ENCODE measurements at regions of chr2 and their contacts with region 1.

Region 1: GRCh38 chr2:38377050-38377828 is at the start of gene ATL2:
- DNase-seq: peak; percentile 96 to 97
- ATAC-seq: peak; percentile 93 to 97 (median 94)
- H3K4me3 ChIP-seq: peak within 1 kb of the TSS; percentile 87 to 100 (median 94)
- H3K27ac ChIP-seq: peak within 1 kb of the TSS; percentile 94 to 100 (median 99)
- H3K4me1 ChIP-seq: peaks cover 0 to 54% (median 34%) of the 10 kb centered on the region in 9 donors
- H3K27me3 ChIP-seq: no peaks in the 10 kb centered on the region
- CTCF ChIP-seq: no peak
- total RNA-seq, gene ATL2: 24.4 to 46.2 (median 31.3) TPM

Region 2: GRCh38 chr2:38409156-38410122 is 32.2 kb after region 1 on chr2:
- intact Hi-C with region 1: loop called in 1 of 10 experiments (anchors 1 kb)
- DNase-seq: peak in 1 of 2 donors; percentile 23
- ATAC-seq: peak in 3 of 8 donors; percentile 34 to 63 (median 43)
- H3K4me3 ChIP-seq: no peak overlapping the region
- H3K27ac ChIP-seq: peak overlapping the region in 1 of 10 donors; percentile 41
- H3K4me1 ChIP-seq: peaks cover 0 to 53% (median 21%) of the 10 kb centered on the region in 9 donors
- H3K27me3 ChIP-seq: no peaks in the 10 kb centered on the region
- CTCF ChIP-seq: no peak

Region 3: GRCh38 chr2:38438883-38439612 is 61.8 kb after region 1 on chr2:
- intact Hi-C with region 1: loop called in 3 of 10 experiments (anchors 10 kb)
- DNase-seq: no peak
- ATAC-seq: peak in 1 of 8 donors; percentile 20
- H3K4me3 ChIP-seq: no peak overlapping the region
- H3K27ac ChIP-seq: no peak overlapping the region
- H3K4me1 ChIP-seq: peaks cover 0 to 29% (median 21%) of the 10 kb centered on the region in 9 donors
- H3K27me3 ChIP-seq: no peaks in the 10 kb centered on the region
- CTCF ChIP-seq: no peak

Region 4: DNA sequence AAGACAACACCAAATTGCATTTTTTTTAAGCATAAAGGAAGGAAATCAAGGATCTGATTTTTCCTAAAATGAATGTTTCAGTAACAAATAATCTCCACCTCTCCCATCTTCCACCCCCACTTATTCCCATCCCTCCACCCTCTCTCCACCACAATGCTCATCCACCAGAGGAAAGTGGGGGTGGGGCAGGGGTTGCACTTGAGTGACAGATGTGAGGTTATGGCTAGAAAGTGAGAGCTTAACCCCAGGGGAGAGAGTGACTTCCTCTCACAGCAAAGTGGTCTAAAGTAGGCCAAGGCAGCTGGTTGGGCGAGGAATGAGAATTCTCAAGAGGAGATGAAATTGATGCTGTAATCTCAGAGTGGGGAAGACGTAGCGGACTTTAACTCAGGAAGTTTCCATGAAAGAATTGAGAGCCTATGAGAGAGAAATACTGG is 120.8 kb after region 1 on chr2:
- intact Hi-C with region 1: loop called in 1 of 10 experiments (anchors 10 kb)
- DNase-seq: peak; percentile 17 to 72
- ATAC-seq: peak in 7 of 8 donors; percentile 28 to 81 (median 70)
- H3K4me3 ChIP-seq: no peak overlapping the region
- H3K27ac ChIP-seq: peak overlapping the region in 5 of 10 donors; percentile 48 to 61 (median 55)
- H3K4me1 ChIP-seq: peaks cover 0 to 41% (median 14%) of the 10 kb centered on the region in 9 donors
- H3K27me3 ChIP-seq: no peaks in the 10 kb centered on the region
- CTCF ChIP-seq: no peak

Region 5: GRCh38 chr2:38581193-38582147 is 204.2 kb after region 1 on chr2:
- intact Hi-C with region 1: no loop called
- DNase-seq: peak in 1 of 2 donors; percentile 46
- ATAC-seq: peak; percentile 60 to 87 (median 82)
- H3K4me3 ChIP-seq: no peak overlapping the region
- H3K27ac ChIP-seq: no peak overlapping the region
- H3K4me1 ChIP-seq: peaks cover 0 to 21% (median 9%) of the 10 kb centered on the region in 9 donors
- H3K27me3 ChIP-seq: no peaks in the 10 kb centered on the region
- CTCF ChIP-seq: peak; percentile 34 to 81 (median 75)